ENCODE measurements at regions of chr17 and their contacts with region 1.

Region 1: GRCh38 chr17:36072431-36073121 is 8.5 kb downstream of the CCL18 start:
- DNase-seq: peak; percentile 83
- ATAC-seq: peak; percentile 92
- H3K4me3 Mint-ChIP-seq: no peak overlapping the region
- H3K27ac Mint-ChIP-seq: no peak overlapping the region
- H3K4me1 Mint-ChIP-seq: peaks cover 5% of the 10 kb centered on the region
- H3K27me3 Mint-ChIP-seq: no peaks in the 10 kb centered on the region
- CTCF ChIP-seq: peak; percentile 63

Region 2: DNA sequence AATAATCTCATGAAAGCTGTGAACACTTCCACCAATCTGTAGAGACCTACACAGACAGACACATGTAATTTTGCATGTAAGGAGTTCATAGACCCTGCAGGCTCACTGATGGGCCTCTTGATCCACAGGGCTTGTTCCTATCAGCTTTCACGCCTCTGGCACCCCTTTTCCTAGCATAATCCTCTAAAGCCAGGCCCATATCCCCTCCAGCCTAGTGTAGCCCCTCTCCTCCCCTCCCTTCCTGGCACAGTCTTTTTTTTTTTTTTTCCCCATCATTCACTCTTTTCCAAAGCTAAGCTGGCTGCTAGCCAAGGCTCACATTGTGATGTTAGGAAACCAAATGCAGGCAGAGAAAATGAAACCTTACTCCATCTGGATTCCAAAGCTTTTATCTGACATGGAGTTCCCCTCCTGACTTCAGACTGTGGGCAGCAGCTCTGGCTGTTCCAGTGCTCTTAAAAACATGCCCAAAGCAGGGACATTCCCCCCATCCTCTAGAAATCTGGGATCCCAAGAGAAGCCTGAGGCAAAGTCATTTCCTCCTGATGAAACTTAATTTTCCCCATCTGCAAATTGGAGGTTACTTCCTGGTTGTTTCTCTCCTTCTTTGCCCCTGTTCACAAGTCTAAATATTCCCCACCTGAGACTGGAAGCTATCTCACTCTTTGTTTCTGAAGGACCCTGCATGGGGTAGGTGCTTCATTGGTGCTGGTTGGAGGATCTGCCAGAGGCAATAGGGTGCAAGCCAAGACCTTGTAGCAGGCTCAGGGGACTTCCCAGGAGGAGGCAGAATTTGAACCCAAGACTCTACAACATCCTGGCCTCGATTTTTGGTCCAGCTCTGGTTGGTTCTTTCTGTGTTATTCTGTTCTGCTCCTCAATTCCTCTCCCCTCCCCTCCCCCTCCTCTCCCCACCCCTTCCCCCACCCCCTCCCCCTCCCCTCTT is 182.5 kb before region 1 on chr17:
- CTCF ChIA-PET with region 1: no interaction called
- POLR2A ChIA-PET with region 1: no interaction called
- DNase-seq: no peak
- ATAC-seq: no peak
- H3K4me3 Mint-ChIP-seq: no peak overlapping the region
- H3K27ac Mint-ChIP-seq: no peak overlapping the region
- H3K4me1 Mint-ChIP-seq: peaks cover 22% of the 10 kb centered on the region
- H3K27me3 Mint-ChIP-seq: no peaks in the 10 kb centered on the region
- CTCF ChIP-seq: no peak

Region 3: GRCh38 chr17:35981908-35982330 is 90.7 kb before region 1 on chr17:
- CTCF ChIA-PET with region 1: interaction called, 159 read pairs
- POLR2A ChIA-PET with region 1: no interaction called
- DNase-seq: peak; percentile 61
- ATAC-seq: peak; percentile 75
- H3K4me3 Mint-ChIP-seq: no peak overlapping the region
- H3K27ac Mint-ChIP-seq: no peak overlapping the region
- H3K4me1 Mint-ChIP-seq: no peaks in the 10 kb centered on the region
- H3K27me3 Mint-ChIP-seq: no peaks in the 10 kb centered on the region; the same call in 1 of the 2 replicates
- CTCF ChIP-seq: no peak

Region 4: GRCh38 chr17:36048066-36048465 is 24.5 kb before region 1 on chr17:
- CTCF ChIA-PET with region 1: interaction called, 12 read pairs
- POLR2A ChIA-PET with region 1: interaction called, 3 read pairs
- DNase-seq: no peak
- ATAC-seq: no peak
- H3K4me3 Mint-ChIP-seq: no peak overlapping the region
- H3K27ac Mint-ChIP-seq: no peak overlapping the region
- H3K4me1 Mint-ChIP-seq: no peaks in the 10 kb centered on the region
- H3K27me3 Mint-ChIP-seq: no peaks in the 10 kb centered on the region; the same call in none of the 2 replicates
- CTCF ChIP-seq: no peak

Region 5: GRCh38 chr17:36089888-36090836 is 17.6 kb after region 1 on chr17 and contains the start of gene CCL3:
- CTCF ChIA-PET with region 1: interaction called, 15 read pairs
- POLR2A ChIA-PET with region 1: interaction called, 3 read pairs
- DNase-seq: no peak
- ATAC-seq: no peak
- H3K4me3 Mint-ChIP-seq: no peak within 1 kb of the TSS
- H3K27ac Mint-ChIP-seq: no peak within 1 kb of the TSS
- H3K4me1 Mint-ChIP-seq: peaks cover 15% of the 10 kb centered on the region
- H3K27me3 Mint-ChIP-seq: no peaks in the 10 kb centered on the region; the same call in 1 of the 2 replicates
- CTCF ChIP-seq: no peak
- total RNA-seq, gene CCL3: 0.44 to 0.72 TPM (median 0.55 TPM) in 3 replicates

Region 6: DNA sequence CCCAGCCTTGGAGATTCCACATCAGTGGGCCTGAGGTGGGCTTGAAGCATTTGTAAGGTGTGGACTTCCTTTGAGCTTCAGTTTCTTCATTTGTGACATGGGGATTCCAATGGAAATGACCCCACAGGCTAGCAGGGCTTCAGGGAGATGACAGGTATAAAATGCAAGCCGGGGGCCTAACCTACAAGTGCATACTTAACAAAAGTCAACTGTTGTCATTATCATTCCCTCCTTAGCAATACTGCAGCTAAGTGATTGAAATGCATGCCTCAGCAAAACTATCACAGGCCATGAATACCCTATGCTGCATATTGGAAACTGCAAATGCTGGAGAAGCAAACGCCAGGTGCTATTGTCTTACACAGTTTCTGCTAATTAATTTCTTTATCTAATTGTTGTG is 50.9 kb after region 1 on chr17:
- CTCF ChIA-PET with region 1: interaction called, 12 read pairs
- POLR2A ChIA-PET with region 1: no interaction called
- DNase-seq: no peak
- ATAC-seq: peak; percentile 56
- H3K4me3 Mint-ChIP-seq: 0 out of 2 replicates have a peak overlapping the region, but pooled peaks have one; percentile 3
- H3K27ac Mint-ChIP-seq: peak overlapping the region; percentile 78
- H3K4me1 Mint-ChIP-seq: peaks cover 36% of the 10 kb centered on the region
- H3K27me3 Mint-ChIP-seq: peaks cover 40% of the 10 kb centered on the region
- CTCF ChIP-seq: no peak

Region 7: DNA sequence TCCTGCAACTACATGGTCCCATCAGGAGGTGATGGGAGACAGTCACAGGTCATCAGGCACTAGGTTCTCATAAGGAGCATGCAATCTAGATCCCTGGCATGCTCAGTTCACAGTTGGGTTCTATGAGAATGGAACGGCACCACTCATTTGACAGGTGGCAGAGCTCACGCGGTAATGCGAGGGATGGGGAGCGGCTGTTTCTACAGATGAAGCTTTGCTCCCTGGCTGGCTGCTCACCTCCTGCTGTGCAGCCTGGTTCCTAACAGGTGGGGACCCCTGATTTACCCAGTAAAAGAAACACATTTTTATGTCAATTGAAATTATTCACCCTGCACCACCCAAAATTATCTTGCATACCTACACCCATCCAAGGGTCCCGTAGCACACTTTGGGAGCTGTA is 371.2 kb after region 1 on chr17:
- CTCF ChIA-PET with region 1: no interaction called
- POLR2A ChIA-PET with region 1: no interaction called
- DNase-seq: no peak
- ATAC-seq: no peak
- H3K4me3 Mint-ChIP-seq: no peak overlapping the region
- H3K27ac Mint-ChIP-seq: no peak overlapping the region
- H3K4me1 Mint-ChIP-seq: no peaks in the 10 kb centered on the region
- H3K27me3 Mint-ChIP-seq: no peaks in the 10 kb centered on the region
- CTCF ChIP-seq: no peak

Region 8: DNA sequence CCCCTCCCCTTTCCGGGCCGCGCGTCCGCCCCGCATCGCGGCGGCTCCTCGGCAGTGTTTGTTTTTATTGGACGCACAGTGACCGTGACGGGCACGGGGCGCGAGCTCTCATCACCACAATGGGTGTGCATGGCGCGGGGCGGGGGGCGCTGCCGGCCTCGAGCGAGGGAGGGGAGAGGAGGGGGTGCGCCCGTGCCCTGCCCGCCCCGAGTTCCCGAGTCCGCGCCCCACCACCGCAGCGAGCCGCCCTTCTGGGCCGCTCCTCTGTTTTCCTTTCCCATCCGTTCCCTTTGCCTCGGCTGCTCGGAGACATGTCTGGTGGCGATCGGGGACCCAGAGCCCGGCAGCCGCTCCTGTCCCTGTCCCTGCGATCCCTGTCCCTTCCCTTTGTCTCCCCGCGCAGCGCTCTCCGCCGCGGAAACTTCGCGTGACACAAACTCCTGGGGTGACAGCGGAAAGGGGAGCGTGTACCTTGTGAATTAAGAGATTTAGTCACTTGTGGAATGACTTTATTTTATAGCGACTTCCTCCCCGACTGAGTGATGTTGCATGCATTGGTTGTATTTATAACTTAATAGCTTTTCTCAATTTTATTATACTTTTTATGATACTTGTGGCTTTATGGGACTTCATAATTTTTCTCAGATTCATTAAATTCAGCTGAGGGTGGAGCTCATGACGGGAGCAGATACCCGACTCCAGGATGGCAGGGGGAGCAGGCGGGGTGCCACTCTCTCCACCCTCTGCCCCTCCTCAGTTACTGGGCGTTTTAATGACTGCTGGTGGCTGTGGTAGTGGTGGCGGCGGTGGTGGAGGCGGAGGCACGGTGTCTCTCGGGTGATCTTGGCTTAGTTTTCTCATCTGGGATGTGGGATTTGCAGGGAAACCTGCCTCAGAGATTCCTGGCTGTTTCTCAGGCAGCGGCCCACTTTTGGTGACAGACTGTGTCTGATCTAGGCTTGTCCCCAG is 569.6 kb after region 1 on chr17:
- CTCF ChIA-PET with region 1: no interaction called
- POLR2A ChIA-PET with region 1: no interaction called
- DNase-seq: peak; percentile 46
- ATAC-seq: peak; percentile 55
- H3K4me3 Mint-ChIP-seq: peak overlapping the region; percentile 76
- H3K27ac Mint-ChIP-seq: no peak overlapping the region
- H3K4me1 Mint-ChIP-seq: peaks cover 23% of the 10 kb centered on the region
- H3K27me3 Mint-ChIP-seq: peaks cover 63% of the 10 kb centered on the region
- CTCF ChIP-seq: no peak

Measured in WTC11 (cell line).